ENCODE measurements at regions of chr19 and their contacts with region 1.

Region 1: GRCh38 chr19:2236314-2237050 is at the starts of genes PLEKHJ1 and SF3A2:
- DNase-seq: peak; percentile 94

Region 2: GRCh38 chr19:2050991-2051772 is 185.3 kb before region 1 on chr19 and contains the start of gene MKNK2:
- in situ Hi-C with region 1: no loop called
- DNase-seq: peak; percentile 79

Region 3: DNA sequence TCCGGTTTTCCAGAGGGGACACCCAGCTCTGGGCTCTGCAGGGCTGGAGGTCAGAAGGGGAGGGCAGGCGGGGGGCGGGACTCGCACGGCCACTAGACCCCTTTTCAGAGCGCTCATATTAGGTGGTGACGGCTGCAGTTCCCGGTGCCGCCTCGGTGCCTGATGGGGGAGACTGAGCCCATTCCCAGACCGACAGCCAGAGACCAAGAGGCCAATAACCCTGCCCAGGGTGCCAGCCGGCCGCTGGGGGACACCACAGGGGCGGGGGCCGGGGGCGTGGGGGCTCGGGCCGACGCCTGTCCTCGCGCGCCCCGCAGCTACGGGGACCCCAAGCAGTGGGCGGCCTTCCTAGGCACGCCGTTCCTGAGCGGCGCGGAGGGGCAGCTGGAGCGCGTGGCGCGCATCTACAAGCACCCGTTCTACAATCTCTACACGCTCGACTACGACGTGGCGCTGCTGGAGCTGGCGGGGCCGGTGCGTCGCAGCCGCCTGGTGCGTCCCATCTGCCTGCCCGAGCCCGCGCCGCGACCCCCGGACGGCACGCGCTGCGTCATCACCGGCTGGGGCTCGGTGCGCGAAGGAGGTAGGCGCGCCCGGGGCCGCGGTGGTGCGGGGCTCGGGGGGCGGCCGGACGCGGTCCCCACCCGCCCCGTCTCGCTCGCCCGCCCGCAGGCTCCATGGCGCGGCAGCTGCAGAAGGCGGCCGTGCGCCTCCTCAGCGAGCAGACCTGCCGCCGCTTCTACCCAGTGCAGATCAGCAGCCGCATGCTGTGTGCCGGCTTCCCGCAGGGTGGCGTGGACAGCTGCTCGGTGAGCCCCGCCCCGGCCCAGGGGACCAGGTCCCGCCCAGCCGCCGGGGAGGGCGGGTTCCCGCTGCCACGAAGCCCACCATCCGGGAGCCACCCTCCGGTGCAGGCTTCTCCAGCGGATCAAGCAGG is 188.5 kb after region 1 on chr19:
- in situ Hi-C with region 1: loop called (anchors 25 kb)
- DNase-seq: no peak